Ascending aorta (tissue), 2 donors: ENCODE measurements at regions of chr7 and their contacts with region 1.

Region 1: DNA sequence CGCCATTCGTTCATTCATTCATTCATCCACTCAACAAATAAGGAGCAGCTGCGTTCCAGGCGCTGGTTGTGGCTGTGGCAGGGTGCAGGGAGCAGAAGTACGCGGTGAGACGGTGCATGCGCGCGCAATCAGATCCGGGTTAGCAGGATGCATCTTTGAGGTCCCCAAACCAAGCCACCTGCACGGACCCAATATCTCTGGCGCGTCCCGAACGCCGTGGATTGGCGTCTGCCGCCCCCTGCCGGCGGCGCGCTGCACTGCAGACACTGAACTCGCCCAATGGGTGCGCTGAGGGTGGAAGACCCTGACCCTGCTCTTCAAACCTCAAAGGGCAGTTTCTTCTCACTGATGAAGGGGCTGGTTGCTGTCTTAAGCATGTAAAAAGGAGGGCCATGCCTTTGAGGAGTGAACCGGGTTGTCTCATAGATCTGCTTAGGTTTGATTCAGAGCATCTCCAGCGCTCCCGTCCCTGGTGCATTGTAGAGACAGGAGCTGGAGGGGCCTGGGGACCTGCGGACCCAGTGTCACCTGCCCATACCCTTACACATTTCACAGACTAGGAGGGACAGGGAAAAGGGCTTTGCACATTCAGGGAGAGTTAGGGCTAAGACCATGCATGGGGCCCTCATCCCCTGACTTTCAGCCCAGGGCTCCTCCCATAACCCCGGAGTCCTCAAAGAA is 102.5 kb downstream of the RAMP3 start:
- DNase-seq: no peak
- H3K4me3 ChIP-seq: no peak overlapping the region
- H3K27ac ChIP-seq: no peak overlapping the region
- H3K4me1 ChIP-seq: no peaks in the 10 kb centered on the region
- H3K27me3 ChIP-seq: no peaks in the 10 kb centered on the region
- CTCF ChIP-seq: peak; percentile 78 to 86 (median 84)

Region 2: DNA sequence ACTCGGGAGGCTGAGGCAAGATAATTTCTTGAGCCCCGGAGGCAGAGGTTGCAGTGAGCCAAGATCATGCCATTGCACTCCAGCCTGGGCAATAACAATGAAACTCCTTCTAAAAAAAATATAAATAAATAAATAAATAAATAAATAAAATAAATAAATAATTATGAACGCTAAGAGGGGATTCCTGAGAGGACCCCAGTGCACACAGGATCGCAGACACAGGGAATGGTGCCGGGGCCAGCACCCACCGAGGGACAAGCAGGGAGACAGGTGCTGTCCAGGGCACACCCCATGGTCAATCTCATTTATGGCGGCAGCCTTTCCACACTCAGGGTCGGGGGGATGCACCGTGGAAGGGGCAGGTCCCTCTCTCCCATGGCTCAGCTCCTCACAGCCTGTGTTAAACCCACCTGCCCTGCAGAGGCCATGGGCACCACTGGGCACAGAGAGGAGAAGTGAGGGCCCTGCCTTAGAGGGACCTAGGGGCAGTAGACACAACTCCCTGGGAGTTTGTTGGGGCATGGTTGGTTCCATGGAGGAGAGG is 104.7 kb before region 1 on chr7:
- intact Hi-C with region 1: loop called (anchors 2 kb)
- DNase-seq: no peak
- H3K4me3 ChIP-seq: no peak overlapping the region
- H3K27ac ChIP-seq: no peak overlapping the region
- H3K4me1 ChIP-seq: peaks cover 0 to 5% of the 10 kb centered on the region in 2 donors
- H3K27me3 ChIP-seq: no peaks in the 10 kb centered on the region
- CTCF ChIP-seq: no peak